AG04450 (cell line): ENCODE measurements at regions of chr4 and their contacts with region 1.

Region 1: DNA sequence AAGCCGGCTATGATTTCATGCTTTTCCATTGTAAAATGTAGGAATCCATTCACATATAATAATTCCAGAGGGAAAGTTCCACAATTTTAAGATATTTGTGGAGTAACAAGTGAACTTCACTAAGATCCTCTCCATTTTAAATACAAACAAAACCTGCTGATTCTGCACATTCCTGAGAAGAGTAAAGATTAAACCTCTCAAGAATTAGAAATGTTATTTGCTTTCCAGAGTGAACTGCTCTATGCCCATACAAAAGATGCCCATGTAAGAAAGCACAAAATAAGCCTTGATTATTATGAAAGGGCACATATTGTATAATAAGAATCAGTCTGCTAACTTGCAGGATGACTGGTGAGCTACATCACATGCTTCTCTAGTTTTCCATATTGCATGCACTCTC is 241.5 kb downstream of the COX18 start:
- DNase-seq: no peak
- H3K4me3 ChIP-seq: no peak overlapping the region
- H3K27ac ChIP-seq: no peak overlapping the region
- H3K27me3 ChIP-seq: no peaks in the 10 kb centered on the region
- CTCF ChIP-seq: no peak

Region 2: DNA sequence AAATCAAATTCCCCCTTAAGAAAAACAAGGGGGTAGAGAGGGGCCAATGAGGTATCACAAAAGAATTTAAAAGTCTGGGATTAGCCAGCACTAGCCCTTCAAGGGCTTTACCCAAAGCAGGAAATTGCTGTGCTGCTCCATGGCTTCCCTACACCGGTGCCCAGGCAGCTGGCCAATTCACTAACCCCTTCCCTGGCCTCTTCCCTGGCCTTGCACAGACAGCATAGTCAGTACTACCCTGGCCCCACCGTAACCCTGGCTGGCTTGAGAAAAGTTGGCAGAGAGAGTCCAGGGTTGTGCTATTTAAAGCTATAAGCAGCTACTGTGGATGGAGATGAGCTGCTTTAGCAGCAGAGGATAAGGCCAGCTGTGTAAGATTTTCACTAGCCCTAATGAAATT is 302.0 kb before region 1 on chr4:
- CTCF ChIA-PET with region 1: interaction called, 10 read pairs
- POLR2A ChIA-PET with region 1: no interaction called
- DNase-seq: no peak
- H3K4me3 ChIP-seq: no peak overlapping the region
- H3K27ac ChIP-seq: no peak overlapping the region
- H3K27me3 ChIP-seq: no peaks in the 10 kb centered on the region
- CTCF ChIP-seq: no peak

Region 3: DNA sequence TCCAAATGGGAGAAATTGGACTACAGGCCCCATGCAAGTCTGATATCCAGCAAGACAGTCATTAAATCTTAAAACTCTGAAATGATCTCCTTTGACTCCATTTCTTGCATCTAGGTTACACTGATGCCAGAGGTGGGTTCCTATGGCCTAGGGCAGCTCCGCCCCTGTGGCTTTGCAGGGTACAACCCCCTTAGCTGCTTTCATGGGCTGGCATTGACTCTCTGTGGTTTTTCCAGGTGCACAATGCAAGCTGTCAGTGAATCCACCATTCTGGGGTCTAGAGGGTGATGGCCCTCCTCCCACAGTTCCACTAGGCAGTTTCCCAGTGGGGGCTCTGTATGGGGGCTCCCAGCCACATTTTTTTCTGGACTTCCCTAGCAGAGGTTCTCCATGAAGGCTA is 30.5 kb before region 1 on chr4:
- CTCF ChIA-PET with region 1: no interaction called
- POLR2A ChIA-PET with region 1: no interaction called
- DNase-seq: no peak
- H3K4me3 ChIP-seq: no peak overlapping the region
- H3K27ac ChIP-seq: no peak overlapping the region
- H3K27me3 ChIP-seq: no peaks in the 10 kb centered on the region
- CTCF ChIP-seq: no peak

Region 4: GRCh38 chr4:73055241-73055897 is 227.4 kb after region 1 on chr4:
- CTCF ChIA-PET with region 1: no interaction called
- POLR2A ChIA-PET with region 1: no interaction called
- DNase-seq: no peak
- H3K4me3 ChIP-seq: no peak overlapping the region
- H3K27ac ChIP-seq: no peak overlapping the region
- H3K27me3 ChIP-seq: no peaks in the 10 kb centered on the region
- CTCF ChIP-seq: no peak